ENCODE measurements at regions of chr7 and their contacts with region 1.

Region 1: GRCh38 chr7:108146070-108146837 is 16.1 kb upstream of the LAMB4 start:
- DNase-seq: peak in 8 of 10 donors; percentile 48 to 88 (median 63)

Region 2: GRCh38 chr7:107666790-107667189 is 479.5 kb before region 1 on chr7:
- intact Hi-C with region 1: no loop called
- DNase-seq: no peak

Region 3: DNA sequence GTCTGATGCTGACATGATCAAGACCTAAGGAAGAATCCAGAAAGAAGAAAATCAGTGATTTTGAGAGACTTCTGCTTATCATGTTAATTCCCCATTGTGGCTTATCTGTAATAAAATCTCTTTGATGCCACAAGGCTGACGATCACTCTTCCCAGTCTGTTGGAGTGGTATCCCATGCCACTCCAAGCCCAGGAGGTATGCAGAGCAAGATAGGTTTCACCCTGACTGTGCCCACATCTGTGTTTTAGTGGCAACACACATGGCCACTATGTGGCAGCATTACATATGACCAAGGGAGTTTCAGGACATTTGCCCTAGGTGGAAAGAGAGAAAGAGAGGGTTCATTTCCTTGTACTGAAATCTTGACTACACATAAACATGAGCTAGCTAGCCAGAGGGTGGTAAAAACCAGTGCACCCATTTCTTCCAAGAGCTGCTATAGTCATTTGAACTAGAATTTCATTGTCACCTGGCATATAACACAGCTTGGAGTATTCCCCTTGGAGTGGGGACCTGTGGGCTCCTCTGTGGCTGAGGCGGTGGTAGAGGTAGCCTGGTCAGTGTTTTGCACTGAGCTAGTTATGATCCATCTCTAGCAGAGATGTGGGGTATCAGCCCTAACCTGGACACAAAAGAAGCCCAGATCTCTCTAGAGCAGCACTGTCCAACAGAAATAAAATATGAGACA is 36.9 kb before region 1 on chr7:
- intact Hi-C with region 1: loop called (anchors 5 kb)
- DNase-seq: peak in 1 of 10 donors; percentile 15

Region 4: GRCh38 chr7:108525985-108526767 is 379.9 kb after region 1 on chr7 and contains the start of gene PNPLA8:
- intact Hi-C with region 1: no loop called
- DNase-seq: peak; percentile 100

Measured in posterior cingulate gyrus (tissue), 11 donors.